Transverse colon (tissue), 4 donors: ENCODE measurements at regions of chr15 and their contacts with region 1.

Region 1: GRCh38 chr15:43275740-43276562 is 9.2 kb upstream of the TGM5 start:
- DNase-seq: no peak
- H3K4me3 ChIP-seq: no peak overlapping the region
- H3K27ac ChIP-seq: no peak overlapping the region
- H3K4me1 ChIP-seq: no peaks in the 10 kb centered on the region
- H3K27me3 ChIP-seq: peaks cover 10% of the 10 kb centered on the region
- CTCF ChIP-seq: no peak
- EP300 ChIP-seq: no peak
- POLR2A ChIP-seq: no peak

Region 2: DNA sequence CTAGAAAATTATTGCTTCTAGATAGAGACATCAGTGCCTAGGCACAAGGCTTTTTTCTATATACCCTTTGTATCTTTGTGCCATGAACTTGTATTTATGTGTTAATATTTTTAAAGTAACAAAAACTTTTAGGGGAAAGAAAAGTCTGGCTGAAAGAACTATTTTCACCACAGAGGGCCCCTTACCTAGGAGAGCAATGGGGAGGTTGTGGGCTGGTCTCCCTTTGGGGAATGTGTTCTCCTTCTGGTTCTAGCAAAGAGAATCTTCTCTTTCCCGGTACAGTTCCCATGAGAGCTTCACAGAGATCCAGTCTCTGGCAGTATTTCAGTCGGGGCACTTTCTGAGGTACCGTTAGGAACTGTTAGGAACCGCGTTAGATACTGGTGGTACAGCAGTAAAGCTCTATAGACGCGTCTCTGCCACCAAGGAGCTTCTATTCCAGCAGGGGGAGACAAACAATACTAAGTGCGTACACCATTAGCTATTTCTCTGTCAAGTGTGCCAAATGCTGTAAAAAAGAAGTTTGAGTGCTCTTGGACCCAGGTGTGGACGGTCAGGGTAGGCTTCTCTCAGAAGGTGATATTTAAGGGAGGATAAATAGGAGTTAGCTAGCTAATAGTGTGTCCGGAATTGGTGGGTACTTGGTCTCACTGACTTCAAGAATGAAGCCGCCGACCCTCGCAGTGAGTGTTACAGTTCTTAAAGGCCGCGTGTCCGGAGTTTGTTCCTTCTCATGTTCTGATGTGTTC is 50.6 kb before region 1 on chr15:
- in situ Hi-C with region 1: loop called in 2 of 4 experiments (anchors 5 kb)
- intact Hi-C with region 1: loop called (anchors 10 kb)
- DNase-seq: peak; percentile 18
- H3K4me3 ChIP-seq: no peak overlapping the region
- H3K27ac ChIP-seq: no peak overlapping the region
- H3K4me1 ChIP-seq: no peaks in the 10 kb centered on the region
- H3K27me3 ChIP-seq: no peaks in the 10 kb centered on the region
- CTCF ChIP-seq: peak; percentile 54 to 64 (median 60)
- EP300 ChIP-seq: no peak
- POLR2A ChIP-seq: no peak